ENCODE measurements at regions of chr13 and their contacts with region 1.

Region 1: GRCh38 chr13:26186118-26186870 is 35.8 kb downstream of the RNF6 start:
- DNase-seq: peak; percentile 48 to 90
- H3K4me3 ChIP-seq: peak overlapping the region; percentile 66 to 93
- H3K27ac ChIP-seq: peak overlapping the region; percentile 81 to 82
- H3K4me1 ChIP-seq: peaks cover 0 to 7% of the 10 kb centered on the region in 2 donors
- H3K27me3 ChIP-seq: no peaks in the 10 kb centered on the region
- CTCF ChIP-seq: peak; percentile 21 to 33 (median 23)

Region 2: DNA sequence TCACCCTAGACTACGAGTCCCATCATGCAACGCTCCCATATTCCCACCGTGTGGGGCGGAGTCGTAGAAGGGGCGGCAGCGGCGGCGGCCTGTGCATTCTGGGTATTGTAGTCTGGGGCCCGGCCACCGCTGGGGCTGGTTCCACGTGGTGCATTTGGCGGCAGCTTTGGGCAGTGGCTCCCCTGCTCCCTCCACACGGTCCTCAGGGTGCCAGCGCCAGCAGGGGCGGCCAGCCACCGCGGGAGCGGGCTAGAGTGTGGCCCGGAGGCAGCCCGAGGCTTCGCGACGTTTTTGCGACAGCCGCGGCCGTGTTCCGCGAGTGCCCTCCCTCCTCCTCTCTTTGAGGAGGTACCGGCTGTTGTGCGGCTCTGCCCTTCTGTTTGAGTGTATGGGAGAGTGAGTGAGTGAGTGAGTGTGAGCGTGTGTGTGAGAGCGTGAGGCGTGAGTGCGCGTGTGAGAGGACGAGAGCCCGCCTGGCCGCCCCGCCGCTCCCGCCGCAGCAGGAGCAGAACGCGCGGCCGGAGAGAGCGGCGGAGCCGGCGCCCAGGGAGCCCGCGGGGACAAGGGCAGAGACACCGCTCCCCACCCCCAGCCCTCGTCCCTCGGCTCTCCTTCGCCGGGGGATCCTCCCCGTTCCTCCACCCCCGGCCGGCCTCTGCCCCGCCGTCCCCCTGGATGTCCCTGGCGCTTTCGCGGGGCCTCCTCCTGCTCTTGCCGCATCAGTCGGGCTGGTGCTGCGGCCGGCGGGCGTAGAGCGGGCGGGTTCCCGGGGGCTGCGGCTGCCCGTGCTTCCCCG is 67.7 kb after region 1 on chr13 and contains the start of gene CDK8:
- intact Hi-C with region 1: loop called (anchors 1 kb)
- DNase-seq: peak; percentile 62 to 93
- H3K4me3 ChIP-seq: peak within 1 kb of the TSS; percentile 86 to 98
- H3K27ac ChIP-seq: peak within 1 kb of the TSS; percentile 94 to 96
- H3K4me1 ChIP-seq: peaks cover 5 to 11% of the 10 kb centered on the region in 2 donors
- H3K27me3 ChIP-seq: no peaks in the 10 kb centered on the region
- CTCF ChIP-seq: no peak
- total RNA-seq, gene CDK8: 4.3 TPM

Region 3: DNA sequence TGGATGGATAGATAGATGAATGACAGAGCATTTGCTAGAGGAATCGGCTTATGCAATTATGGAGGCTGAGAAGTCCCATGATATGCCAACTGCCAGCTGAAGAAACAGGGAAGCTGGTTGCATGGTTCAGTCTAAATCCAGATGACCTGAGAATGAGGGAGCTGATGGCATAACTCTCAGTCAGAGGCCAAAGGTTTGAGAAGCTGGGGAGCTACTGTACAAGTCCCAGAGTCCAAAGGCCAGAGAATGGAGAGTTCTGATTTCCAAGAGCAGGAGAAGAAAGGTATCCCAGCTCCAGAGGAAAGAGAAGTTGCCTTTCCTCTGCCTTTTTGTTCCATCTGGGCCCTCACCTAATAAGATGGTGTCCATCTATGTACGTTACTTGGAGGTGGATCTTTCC is 176.0 kb after region 1 on chr13:
- intact Hi-C with region 1: no loop called
- DNase-seq: no peak
- H3K4me3 ChIP-seq: no peak overlapping the region
- H3K27ac ChIP-seq: no peak overlapping the region
- H3K4me1 ChIP-seq: no peaks in the 10 kb centered on the region
- H3K27me3 ChIP-seq: no peaks in the 10 kb centered on the region
- CTCF ChIP-seq: no peak

Region 4: DNA sequence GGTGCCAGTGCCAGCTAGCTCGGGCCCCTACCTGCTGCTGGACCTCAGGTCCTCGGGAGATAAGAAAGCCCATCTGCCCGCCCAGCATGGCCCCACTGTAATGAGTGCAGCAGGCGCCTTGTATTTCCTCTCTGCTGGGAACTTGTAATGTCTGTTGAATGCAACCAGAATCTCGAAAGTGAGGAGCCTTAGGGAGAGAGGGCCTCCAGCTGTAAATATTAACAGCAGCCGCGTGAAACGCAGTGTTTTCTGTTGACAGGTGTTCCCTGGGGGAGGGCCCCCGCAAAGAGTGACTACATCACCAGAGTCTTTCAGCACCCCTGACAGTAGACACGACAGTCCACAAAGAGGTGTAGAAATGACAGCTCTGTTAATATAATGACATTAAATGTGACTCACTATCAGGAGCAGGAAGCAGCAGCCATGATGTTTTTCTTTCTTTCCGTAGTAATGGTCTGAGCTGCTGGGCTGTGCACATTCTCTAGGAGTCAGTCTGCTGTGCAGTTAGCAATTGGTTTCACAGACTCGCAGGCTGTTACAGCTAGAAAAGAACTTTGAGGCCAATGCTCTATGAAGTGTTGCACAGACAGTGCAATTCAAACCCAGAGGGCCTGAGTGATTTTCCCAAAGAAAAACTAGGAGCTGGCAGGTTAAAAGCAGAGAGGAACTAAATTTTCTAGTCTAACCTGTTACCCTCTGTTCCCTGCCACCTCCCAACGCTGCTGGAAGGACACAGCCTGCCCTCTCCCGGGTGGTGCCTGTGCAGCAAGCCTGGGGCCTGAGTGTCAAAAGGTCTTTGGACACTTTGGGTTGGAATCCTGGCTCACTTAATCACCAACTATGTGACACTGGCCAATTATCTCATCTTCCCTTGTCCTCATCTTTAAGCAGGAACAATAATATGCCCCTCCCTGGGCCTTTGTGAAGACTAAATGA is 312.6 kb after region 1 on chr13:
- intact Hi-C with region 1: loop called (anchors 1 kb)
- DNase-seq: no peak
- H3K4me3 ChIP-seq: no peak overlapping the region
- H3K27ac ChIP-seq: no peak overlapping the region
- H3K4me1 ChIP-seq: no peaks in the 10 kb centered on the region
- H3K27me3 ChIP-seq: no peaks in the 10 kb centered on the region
- CTCF ChIP-seq: no peak

Region 5: GRCh38 chr13:26680123-26680450 is 493.8 kb after region 1 on chr13:
- intact Hi-C with region 1: loop called (anchors 5 kb)
- DNase-seq: no peak
- H3K4me3 ChIP-seq: peak overlapping the region in 1 of 2 donors; percentile 37
- H3K27ac ChIP-seq: peak overlapping the region; percentile 17 to 47
- H3K4me1 ChIP-seq: no peaks in the 10 kb centered on the region
- H3K27me3 ChIP-seq: no peaks in the 10 kb centered on the region
- CTCF ChIP-seq: no peak